ENCODE measurements at regions of chr21 and their contacts with region 1.

Region 1: GRCh38 chr21:32257962-32258785 is 20.7 kb downstream of the MIS18A start:
- DNase-seq: peak; percentile 70 to 77
- H3K4me3 ChIP-seq: no peak overlapping the region
- H3K4me1 ChIP-seq: no peaks in the 10 kb centered on the region
- H3K27me3 ChIP-seq: peaks cover 5% of the 10 kb centered on the region; the same call in 1 of the 2 replicates

Region 2: GRCh38 chr21:31781737-31782136 is 476.4 kb before region 1 on chr21:
- in situ Hi-C with region 1: loop called (anchors 25 kb)
- DNase-seq: no peak
- H3K4me3 ChIP-seq: no peak overlapping the region
- H3K4me1 ChIP-seq: no peaks in the 10 kb centered on the region
- H3K27me3 ChIP-seq: no peaks in the 10 kb centered on the region

Region 3: DNA sequence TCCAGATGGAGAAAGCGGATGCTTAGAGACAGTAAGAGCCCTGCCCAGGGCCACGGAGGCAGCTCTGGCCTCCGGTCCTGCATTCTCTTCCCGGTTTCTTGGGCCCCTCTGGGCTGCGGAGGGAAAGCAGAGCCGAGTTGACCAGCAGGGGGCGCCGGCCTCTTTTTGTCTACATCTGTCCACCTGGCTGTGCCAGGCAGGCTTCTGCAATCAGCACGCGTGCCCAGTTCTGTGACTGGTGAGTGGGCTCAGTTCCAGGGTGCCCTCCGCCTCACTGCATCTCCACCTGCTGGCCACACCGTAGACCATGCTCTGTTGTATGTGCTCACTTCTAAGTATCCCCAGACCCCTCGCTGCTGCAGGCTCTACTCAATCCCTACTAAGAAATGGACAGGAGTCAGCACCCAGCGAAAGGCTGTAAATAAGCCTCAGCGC is 392.1 kb before region 1 on chr21:
- in situ Hi-C with region 1: loop called (anchors 10 kb)
- DNase-seq: peak; percentile 52 to 92
- H3K4me3 ChIP-seq: no peak overlapping the region
- H3K4me1 ChIP-seq: no peaks in the 10 kb centered on the region
- H3K27me3 ChIP-seq: no peaks in the 10 kb centered on the region; the same call in 1 of the 2 replicates

Region 4: DNA sequence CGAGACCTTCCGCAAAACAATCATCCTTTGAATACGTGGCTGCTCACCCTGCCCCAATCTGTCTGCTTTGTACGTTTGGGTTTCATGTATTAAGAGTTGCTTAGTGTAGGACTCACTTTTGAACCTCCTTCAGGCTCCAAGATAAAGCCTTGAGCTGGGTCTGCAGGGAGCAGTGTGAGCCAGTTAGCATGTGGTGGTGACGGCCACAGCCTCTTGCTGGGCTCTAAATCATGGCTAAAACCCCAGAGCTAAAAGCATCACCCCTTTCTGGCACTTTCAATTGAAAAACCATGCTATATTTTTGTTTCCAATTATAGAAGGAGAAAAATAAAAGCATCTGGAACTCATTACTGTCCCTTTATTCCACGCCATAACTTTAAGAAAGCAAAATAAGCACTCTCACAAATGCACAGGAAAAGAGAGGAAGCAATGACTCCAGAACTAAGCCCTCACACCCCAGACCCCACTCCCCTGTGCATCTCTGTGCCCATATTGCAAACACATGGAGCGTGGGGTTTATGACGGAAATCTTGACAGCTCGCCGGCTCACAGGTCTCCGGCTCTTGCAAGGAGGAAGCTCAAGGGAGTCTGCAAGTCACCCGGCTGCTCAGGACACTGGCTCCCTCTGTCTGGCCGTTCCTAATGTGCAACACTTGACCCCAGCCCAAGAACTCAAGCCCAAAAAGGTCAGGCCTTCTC is 114.8 kb before region 1 on chr21:
- in situ Hi-C with region 1: no loop called
- DNase-seq: no peak
- H3K4me3 ChIP-seq: no peak overlapping the region
- H3K4me1 ChIP-seq: no peaks in the 10 kb centered on the region
- H3K27me3 ChIP-seq: no peaks in the 10 kb centered on the region; the same call in 1 of the 2 replicates

Measured in HAP-1 (cell line).